ENCODE measurements at regions of chr11 and their contacts with region 1.

Region 1: GRCh38 chr11:118592616-118593367 is 14.6 kb upstream of the PHLDB1 start:
- DNase-seq: no peak
- H3K4me3 ChIP-seq: no peak overlapping the region
- H3K4me3 Mint-ChIP-seq: no peak overlapping the region
- H3K27ac ChIP-seq: no peak overlapping the region
- H3K27ac Mint-ChIP-seq: peak overlapping the region in 2 of 7 donors; percentile 29 to 59
- H3K4me1 ChIP-seq: peaks cover 14% of the 10 kb centered on the region
- H3K4me1 Mint-ChIP-seq: peaks cover 11 to 15% (median 13%) of the 10 kb centered on the region in 4 donors
- H3K27me3 ChIP-seq: no peaks in the 10 kb centered on the region
- H3K27me3 Mint-ChIP-seq: no peaks in the 10 kb centered on the region

Region 2: DNA sequence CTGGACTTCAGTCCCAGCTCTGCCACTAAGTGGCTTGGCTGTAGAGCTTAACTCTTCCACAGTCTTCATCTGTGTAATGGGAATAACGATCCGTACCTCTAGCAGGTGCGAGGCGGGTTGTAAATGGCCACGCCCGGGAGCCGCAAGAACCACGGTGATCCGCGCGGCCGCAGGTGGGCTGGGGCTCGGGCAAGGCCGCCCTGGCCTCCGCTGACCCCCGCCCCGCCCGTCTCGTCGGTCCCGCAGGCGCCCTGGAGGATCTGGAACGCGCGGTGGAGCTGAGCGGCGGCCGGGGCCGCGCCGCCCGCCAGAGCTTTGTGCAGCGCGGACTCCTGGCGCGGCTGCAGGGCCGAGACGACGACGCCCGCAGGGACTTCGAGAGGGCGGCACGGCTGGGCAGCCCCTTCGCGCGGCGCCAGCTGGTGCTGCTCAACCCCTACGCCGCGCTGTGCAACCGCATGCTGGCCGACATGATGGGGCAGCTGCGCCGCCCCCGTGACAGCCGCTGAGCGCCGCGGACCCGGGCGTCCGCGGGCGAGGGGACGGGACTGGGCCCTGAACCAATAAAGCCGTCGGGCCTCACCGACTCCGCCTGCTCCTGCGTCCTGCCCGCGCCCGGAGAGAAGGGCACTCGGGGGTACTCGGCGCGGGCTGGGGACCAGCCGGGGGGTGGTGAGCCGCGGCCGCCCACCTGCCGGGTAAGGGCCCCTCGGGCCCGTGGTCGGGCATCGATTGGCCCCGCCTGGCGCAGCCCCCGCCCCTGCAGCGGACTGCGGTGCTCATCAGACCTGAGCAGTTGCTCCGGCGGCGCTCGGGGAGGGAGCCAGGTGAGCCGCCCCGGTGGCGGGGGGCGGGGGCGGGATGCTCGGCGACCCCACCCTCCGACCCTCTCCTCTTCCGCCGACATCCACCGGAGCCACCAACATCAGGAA is 62.1 kb before region 1 on chr11 and contains the start of gene TMEM25:
- CTCF ChIA-PET with region 1: no interaction called
- POLR2A ChIA-PET with region 1: no interaction called
- intact Hi-C with region 1: no loop called
- DNase-seq: peak; percentile 68 to 78 (median 72)
- H3K4me3 ChIP-seq: peak within 1 kb of the TSS; percentile 65 to 77
- H3K4me3 Mint-ChIP-seq: peak within 1 kb of the TSS; percentile 91 to 98 (median 93)
- H3K27ac ChIP-seq: peak within 1 kb of the TSS; percentile 65
- H3K27ac Mint-ChIP-seq: peak within 1 kb of the TSS; percentile 84 to 97 (median 92)
- H3K4me1 ChIP-seq: peaks cover 32% of the 10 kb centered on the region
- H3K4me1 Mint-ChIP-seq: peaks cover 19 to 47% (median 31%) of the 10 kb centered on the region in 4 donors
- H3K27me3 ChIP-seq: no peaks in the 10 kb centered on the region
- H3K27me3 Mint-ChIP-seq: no peaks in the 10 kb centered on the region
- total RNA-seq, gene TMEM25: 19.5 to 20.0 TPM

Region 3: DNA sequence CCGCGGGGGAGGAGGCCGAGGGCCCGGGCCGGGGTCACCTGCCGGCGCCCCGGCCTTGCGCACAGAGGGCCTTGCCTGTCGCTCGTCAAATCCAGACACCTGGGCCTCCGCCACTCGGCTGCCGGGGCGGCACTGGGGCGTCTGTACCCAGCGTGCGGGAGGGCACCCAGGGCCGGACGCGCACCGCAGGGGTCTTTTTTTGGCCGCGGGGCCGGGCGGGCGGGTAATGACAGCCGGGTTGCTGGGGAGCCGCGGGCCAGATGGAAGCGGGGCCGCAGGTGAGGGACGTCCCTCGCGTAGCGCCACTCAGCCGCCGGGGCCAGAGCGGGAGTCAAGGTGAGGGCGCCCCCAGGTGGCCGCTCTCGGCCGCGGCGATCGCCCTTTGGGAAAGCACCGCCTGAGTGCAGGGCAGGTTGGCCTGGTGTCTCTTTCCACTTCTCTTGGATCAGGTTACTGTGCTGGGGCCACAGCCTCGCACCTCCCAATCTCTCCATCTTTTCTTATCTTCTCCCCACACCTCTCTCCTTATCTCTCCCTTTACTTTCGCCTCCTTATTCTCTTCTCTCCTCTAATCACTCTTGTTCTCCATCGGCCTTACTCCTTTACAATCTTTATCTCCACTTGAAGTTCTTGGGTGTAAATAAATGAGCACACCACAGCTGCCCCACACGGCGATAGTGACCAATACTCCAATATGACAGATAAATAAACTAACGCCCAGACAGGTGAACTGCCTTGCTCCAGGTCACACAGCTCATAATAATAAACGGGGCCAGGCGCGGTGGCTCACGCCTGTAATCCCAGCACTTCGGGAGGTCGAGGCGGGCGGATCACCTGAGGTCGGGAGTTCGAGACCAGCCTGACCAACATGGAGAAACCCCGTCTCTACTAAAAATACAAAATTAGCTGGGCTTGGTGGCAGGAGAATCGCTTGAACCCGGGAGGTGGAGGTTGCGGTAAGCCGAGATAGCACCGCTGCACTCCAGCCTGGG is 18.3 kb after region 1 on chr11:
- CTCF ChIA-PET with region 1: interaction called, 106 read pairs
- POLR2A ChIA-PET with region 1: interaction called, 13 read pairs
- intact Hi-C with region 1: loop called (anchors 1 kb)
- DNase-seq: peak; percentile 79 to 87 (median 83)
- H3K4me3 ChIP-seq: peak overlapping the region; percentile 29 to 54
- H3K4me3 Mint-ChIP-seq: peak overlapping the region; percentile 65 to 86 (median 78)
- H3K27ac ChIP-seq: peak overlapping the region; percentile 67
- H3K27ac Mint-ChIP-seq: peak overlapping the region in 5 of 7 donors; percentile 45 to 94 (median 74)
- H3K4me1 ChIP-seq: peaks cover 24% of the 10 kb centered on the region
- H3K4me1 Mint-ChIP-seq: peaks cover 15 to 35% (median 21%) of the 10 kb centered on the region in 4 donors
- H3K27me3 ChIP-seq: no peaks in the 10 kb centered on the region
- H3K27me3 Mint-ChIP-seq: peaks cover 4% of the 10 kb centered on the region in 2 donors